ENCODE measurements at regions of chrX and their contacts with region 1.

Region 1: DNA sequence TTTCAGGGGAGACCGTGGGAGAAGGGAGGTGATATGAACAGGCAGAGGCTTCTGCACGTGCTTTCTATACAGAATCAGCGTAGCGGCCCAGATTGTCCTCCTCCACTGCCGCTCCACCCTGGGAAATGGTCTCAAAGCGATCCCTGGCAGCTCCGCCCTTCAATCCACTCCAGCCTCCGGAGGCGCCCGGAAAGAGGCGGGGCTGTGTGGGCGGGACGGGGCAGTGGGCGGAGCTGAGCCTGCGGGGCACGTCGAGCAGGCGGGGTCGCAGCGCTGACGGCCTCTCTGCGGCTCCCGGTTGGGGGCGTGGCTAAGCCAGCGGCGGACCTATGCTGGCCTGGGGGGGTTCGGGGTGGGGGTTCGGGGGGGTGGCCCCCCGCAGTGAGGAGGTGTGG is 210 bp upstream of the SMIM10L2A start:
- DNase-seq: peak; percentile 91
- H3K4me3 ChIP-seq: peak overlapping the region; percentile 19 to 60 (median 54)
- H3K27ac ChIP-seq: peak overlapping the region in 3 of 4 donors; percentile 17 to 31 (median 25)
- H3K4me1 ChIP-seq: peaks cover 0 to 6% (median 3%) of the 10 kb centered on the region in 4 donors
- H3K27me3 ChIP-seq: peaks cover 0 to 3% (median 0%) of the 10 kb centered on the region in 3 donors
- CTCF ChIP-seq: no peak
- EP300 ChIP-seq: no peak
- POLR2A ChIP-seq: no peak

Region 2: DNA sequence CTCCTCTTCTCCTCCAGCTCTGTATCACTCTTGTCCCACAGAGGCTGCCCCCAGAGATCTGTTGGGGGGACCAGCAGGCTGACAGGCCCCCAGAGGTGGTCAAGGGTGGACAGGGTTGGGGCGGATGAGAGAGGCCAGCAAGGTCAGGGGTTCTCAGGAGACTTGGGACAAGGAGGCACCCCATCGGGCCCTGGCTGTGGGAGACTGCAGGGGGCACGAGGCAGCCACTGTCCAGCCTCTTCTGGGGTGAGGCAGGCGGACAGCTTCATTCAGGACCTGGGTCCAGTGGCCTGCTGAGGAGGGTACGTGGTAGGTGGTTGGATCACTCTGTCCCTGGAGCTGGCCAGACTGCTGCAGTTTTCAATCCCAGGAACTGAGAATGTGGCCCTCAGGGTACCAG is 325.8 kb before region 1 on chrX:
- intact Hi-C with region 1: loop called (anchors 5 kb)
- DNase-seq: no peak
- H3K4me3 ChIP-seq: no peak overlapping the region
- H3K27ac ChIP-seq: no peak overlapping the region
- H3K4me1 ChIP-seq: peaks cover 0 to 13% (median 6%) of the 10 kb centered on the region in 4 donors
- H3K27me3 ChIP-seq: peaks cover 0 to 3% (median 0%) of the 10 kb centered on the region in 3 donors
- CTCF ChIP-seq: no peak
- EP300 ChIP-seq: no peak
- POLR2A ChIP-seq: no peak

Region 3: GRCh38 chrX:135521405-135522189 is 100.1 kb after region 1 on chrX:
- intact Hi-C with region 1: loop called (anchors 5 kb)
- DNase-seq: peak; percentile 94
- H3K4me3 ChIP-seq: peak overlapping the region; percentile 62 to 80 (median 68)
- H3K27ac ChIP-seq: peak overlapping the region; percentile 91 to 96 (median 94)
- H3K4me1 ChIP-seq: peaks cover 0 to 5% (median 0%) of the 10 kb centered on the region in 4 donors
- H3K27me3 ChIP-seq: no peaks in the 10 kb centered on the region
- CTCF ChIP-seq: no peak
- EP300 ChIP-seq: no peak
- POLR2A ChIP-seq: peak; percentile 22 to 31